K562 (cell line): ENCODE measurements at regions of chr3 and their contacts with region 1.

Region 1: GRCh38 chr3:12729051-12729651 is 29.9 kb downstream of the TMEM40 start:
- DNase-seq: no peak
- ATAC-seq: no peak
- H3K4me3 ChIP-seq: no peak overlapping the region
- H3K27ac ChIP-seq: no peak overlapping the region
- H3K4me1 ChIP-seq: no peaks in the 10 kb centered on the region
- H3K27me3 ChIP-seq: peaks cover 9 to 17% of the 10 kb centered on the region in 2 experiments
- CTCF ChIP-seq: no peak
- EP300 ChIP-seq: no peak
- POLR2A ChIP-seq: no peak
- RAD21 ChIP-seq: no peak

Region 2: DNA sequence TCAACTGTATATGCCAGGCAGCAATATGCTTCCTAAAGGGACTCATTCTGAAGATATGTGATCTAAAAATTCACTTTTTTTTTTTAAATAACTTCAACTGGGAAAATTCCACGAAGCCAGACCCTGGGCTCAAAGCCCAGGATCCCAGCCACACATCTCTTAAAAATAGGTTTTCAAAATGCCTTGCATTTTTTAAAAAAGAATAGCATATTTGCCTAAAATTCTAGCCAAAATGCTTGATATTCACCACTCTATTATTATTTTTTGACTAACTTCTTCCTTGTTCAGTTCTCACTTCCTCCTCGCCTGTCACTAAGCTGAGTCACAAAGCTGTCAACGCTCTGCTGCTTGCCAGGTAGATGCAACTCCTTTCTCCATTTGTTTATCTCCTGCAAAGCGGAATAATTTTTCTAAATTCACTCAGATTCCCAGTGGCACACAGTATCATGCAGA is 1057.5 kb before region 1 on chr3:
- CTCF ChIA-PET with region 1: no interaction called
- POLR2A ChIA-PET with region 1: no interaction called
- in situ Hi-C with region 1: no loop called
- intact Hi-C with region 1: no loop called
- DNase-seq: peak in 1 of 4 experiments; percentile 16
- ATAC-seq: no peak
- H3K4me3 ChIP-seq: no peak overlapping the region
- H3K27ac ChIP-seq: no peak overlapping the region
- H3K4me1 ChIP-seq: no peaks in the 10 kb centered on the region; a peak in 1 of 5 replicates
- H3K27me3 ChIP-seq: peaks cover 18 to 29% of the 10 kb centered on the region in 2 experiments
- CTCF ChIP-seq: no peak
- EP300 ChIP-seq: no peak
- POLR2A ChIP-seq: no peak
- RAD21 ChIP-seq: no peak

Region 3: GRCh38 chr3:11995120-11995519 is 734.0 kb before region 1 on chr3:
- CTCF ChIA-PET with region 1: no interaction called
- POLR2A ChIA-PET with region 1: no interaction called
- in situ Hi-C with region 1: loop called (anchors 25 kb)
- intact Hi-C with region 1: no loop called
- DNase-seq: no peak
- ATAC-seq: no peak
- H3K4me3 ChIP-seq: no peak overlapping the region
- H3K27ac ChIP-seq: no peak overlapping the region
- H3K4me1 ChIP-seq: no peaks in the 10 kb centered on the region
- H3K27me3 ChIP-seq: peaks cover 0 to 3% of the 10 kb centered on the region in 2 experiments; a peak in 3 of 5 replicates
- CTCF ChIP-seq: no peak
- EP300 ChIP-seq: no peak
- POLR2A ChIP-seq: no peak
- RAD21 ChIP-seq: no peak